ENCODE measurements at regions of chr3 and their contacts with region 1.

Region 1: DNA sequence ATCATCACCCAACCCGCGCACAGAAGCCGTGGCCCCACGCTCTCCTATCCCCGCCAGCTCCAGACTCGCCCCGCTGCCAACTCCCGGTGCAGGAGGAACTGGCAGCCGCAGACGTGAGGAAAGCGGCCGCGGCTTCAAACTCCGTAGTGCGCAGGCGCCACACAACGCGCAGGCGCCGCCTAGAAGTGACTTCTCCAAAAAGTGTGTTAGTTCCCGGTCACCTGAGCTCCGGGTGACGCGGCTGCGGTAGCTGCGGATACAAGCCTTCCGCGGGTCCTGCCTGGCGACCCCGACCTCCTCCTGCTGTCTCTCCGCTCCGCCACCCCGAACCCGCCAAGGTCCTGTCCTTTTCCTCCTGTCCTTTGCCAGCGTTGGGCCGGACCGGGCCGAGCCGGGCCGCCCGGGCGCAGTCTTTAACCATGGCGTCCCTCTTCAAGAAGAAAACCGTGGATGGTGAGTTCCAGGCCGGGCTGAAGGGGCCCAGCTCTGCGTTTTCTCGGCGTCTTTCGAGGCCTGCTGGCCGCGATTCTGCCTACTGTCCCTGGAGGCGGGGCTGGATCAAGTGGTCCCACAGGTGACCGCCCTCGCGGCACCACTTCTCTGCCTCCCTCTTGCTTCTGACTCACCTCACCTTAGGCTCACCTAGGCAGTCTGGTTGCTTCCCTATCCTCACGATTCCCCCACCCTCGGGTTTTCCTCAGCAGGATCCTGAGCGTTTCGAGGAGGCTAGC is at the start of gene CHMP2B:
- DNase-seq: peak; percentile 81
- ATAC-seq: peak; percentile 97
- H3K4me3 ChIP-seq: peak within 1 kb of the TSS; percentile 78 to 97 (median 88)
- H3K27ac ChIP-seq: peak within 1 kb of the TSS; percentile 76
- H3K4me1 ChIP-seq: peaks cover 24% of the 10 kb centered on the region
- H3K27me3 ChIP-seq: no peaks in the 10 kb centered on the region; a peak in 1 of 5 replicates
- CTCF ChIP-seq: no peak
- EP300 ChIP-seq: no peak
- POLR2A ChIP-seq: peak; percentile 76 to 85
- RAD21 ChIP-seq: no peak
- total RNA-seq, gene CHMP2B: 33.5 and 47.3 TPM in 2 replicates

Region 2: GRCh38 chr3:87206074-87207034 is 20.9 kb before region 1 on chr3:
- CTCF ChIA-PET with region 1: no interaction called
- POLR2A ChIA-PET with region 1: interaction called, 4 read pairs
- in situ Hi-C with region 1: no loop called
- intact Hi-C with region 1: loop called (anchors 1 kb)
- DNase-seq: peak; percentile 82
- ATAC-seq: peak; percentile 98
- H3K4me3 ChIP-seq: peak overlapping the region in 1 of 3 experiments; percentile 18; a peak in 1 of 6 replicates
- H3K27ac ChIP-seq: peak overlapping the region; percentile 47
- H3K4me1 ChIP-seq: peaks cover 48% of the 10 kb centered on the region
- H3K27me3 ChIP-seq: no peaks in the 10 kb centered on the region
- CTCF ChIP-seq: no peak
- EP300 ChIP-seq: peak in 1 of 2 experiments; percentile 72; a peak in 2 of 4 replicates
- POLR2A ChIP-seq: no peak
- RAD21 ChIP-seq: no peak

Region 3: GRCh38 chr3:87247430-87247773 is 20.1 kb after region 1 on chr3:
- CTCF ChIA-PET with region 1: no interaction called
- POLR2A ChIA-PET with region 1: no interaction called
- in situ Hi-C with region 1: no loop called
- intact Hi-C with region 1: no loop called
- DNase-seq: no peak
- ATAC-seq: no peak
- H3K4me3 ChIP-seq: no peak overlapping the region
- H3K27ac ChIP-seq: no peak overlapping the region
- H3K4me1 ChIP-seq: no peaks in the 10 kb centered on the region
- H3K27me3 ChIP-seq: no peaks in the 10 kb centered on the region
- CTCF ChIP-seq: no peak
- EP300 ChIP-seq: no peak
- POLR2A ChIP-seq: no peak
- RAD21 ChIP-seq: no peak

Region 4: GRCh38 chr3:87276484-87276883 is 49.2 kb after region 1 on chr3 and contains the start of gene POU1F1:
- CTCF ChIA-PET with region 1: no interaction called
- POLR2A ChIA-PET with region 1: no interaction called
- in situ Hi-C with region 1: no loop called
- intact Hi-C with region 1: no loop called
- DNase-seq: no peak
- ATAC-seq: no peak
- H3K4me3 ChIP-seq: no peak within 1 kb of the TSS
- H3K27ac ChIP-seq: no peak within 1 kb of the TSS
- H3K4me1 ChIP-seq: no peaks in the 10 kb centered on the region
- H3K27me3 ChIP-seq: no peaks in the 10 kb centered on the region
- CTCF ChIP-seq: no peak
- EP300 ChIP-seq: no peak
- POLR2A ChIP-seq: no peak
- RAD21 ChIP-seq: no peak
- total RNA-seq, gene POU1F1: not detected in 2 replicates